ENCODE measurements at regions of chr17 and their contacts with region 1.

Region 1: GRCh38 chr17:69327060-69327831 is at the start of gene ABCA5:
- DNase-seq: peak; percentile 99
- ATAC-seq: peak; percentile 88
- H3K4me3 ChIP-seq: peak within 1 kb of the TSS; percentile 74
- H3K27ac ChIP-seq: no peak within 1 kb of the TSS; the same call in 1 of the 2 replicates
- H3K4me1 ChIP-seq: peaks cover 18% of the 10 kb centered on the region
- H3K27me3 ChIP-seq: no peaks in the 10 kb centered on the region
- CTCF ChIP-seq: no peak
- total RNA-seq, gene ABCA5: 7.0 and 9.4 TPM in 2 replicates

Region 2: DNA sequence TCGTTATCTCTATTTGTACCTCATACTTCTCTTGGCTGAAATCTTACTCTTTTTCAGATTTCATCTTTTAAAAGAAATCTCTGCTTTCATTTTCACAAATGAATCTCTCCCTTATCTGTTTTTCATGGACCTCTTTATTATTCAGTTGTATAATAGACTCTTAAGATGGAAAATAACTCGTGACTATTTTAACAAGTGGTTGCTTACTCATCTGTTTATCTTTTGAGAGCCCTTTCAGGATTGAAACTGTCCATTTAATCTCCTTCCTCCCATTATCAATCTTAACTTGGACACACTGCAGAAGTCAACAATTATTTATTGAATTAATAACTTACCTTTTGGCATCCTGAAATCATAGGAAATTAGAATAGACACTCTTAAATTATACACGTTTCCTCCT is 440.8 kb before region 1 on chr17:
- CTCF ChIA-PET with region 1: no interaction called
- POLR2A ChIA-PET with region 1: no interaction called
- intact Hi-C with region 1: no loop called
- DNase-seq: no peak
- ATAC-seq: no peak
- H3K4me3 ChIP-seq: no peak overlapping the region
- H3K27ac ChIP-seq: no peak overlapping the region
- H3K4me1 ChIP-seq: no peaks in the 10 kb centered on the region
- H3K27me3 ChIP-seq: peaks cover 18% of the 10 kb centered on the region; the same call in 1 of the 2 replicates
- CTCF ChIP-seq: no peak

Region 3: DNA sequence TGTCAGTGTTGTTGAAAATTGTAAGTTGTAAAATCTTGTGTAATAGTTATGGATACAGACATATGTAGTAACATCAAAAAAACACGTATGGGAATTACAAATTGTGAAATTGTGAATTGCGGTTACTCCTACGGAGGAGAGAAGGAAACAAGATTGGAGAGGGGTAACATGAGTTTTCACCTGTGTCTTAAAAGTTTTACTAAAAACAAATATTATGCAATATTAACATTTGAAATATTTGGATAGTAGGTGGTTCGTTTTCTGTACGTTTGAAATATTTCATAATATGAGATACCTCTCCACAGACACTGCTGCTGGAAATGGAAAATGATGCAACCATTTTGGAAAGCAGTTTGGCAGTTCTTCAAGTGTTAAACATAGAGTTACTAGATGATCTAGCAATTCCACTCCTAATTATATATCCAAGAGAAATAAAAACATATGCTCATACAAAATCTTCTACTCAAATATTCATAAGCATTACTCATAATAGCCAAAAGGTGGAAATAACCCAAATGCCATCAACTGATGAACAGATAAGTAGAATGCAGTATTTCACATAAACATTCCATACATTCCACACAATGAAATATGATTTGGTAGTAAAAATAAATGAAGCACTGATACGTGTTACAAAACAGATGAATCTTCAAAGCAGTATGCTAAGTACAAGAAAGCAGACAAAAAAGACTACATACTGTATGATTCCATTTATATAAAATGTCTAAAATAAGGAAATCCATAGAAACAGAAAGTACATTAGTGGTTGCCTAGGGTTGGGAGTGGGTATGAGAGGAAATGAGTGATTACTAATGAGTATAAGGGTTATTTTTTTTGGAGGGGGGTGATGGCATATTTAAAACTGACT is 57.9 kb before region 1 on chr17:
- CTCF ChIA-PET with region 1: no interaction called
- POLR2A ChIA-PET with region 1: interaction called, 5 read pairs
- intact Hi-C with region 1: loop called (anchors 1 kb)
- DNase-seq: peak; percentile 95
- ATAC-seq: peak; percentile 89
- H3K4me3 ChIP-seq: peak overlapping the region; percentile 49
- H3K27ac ChIP-seq: peak overlapping the region; percentile 52
- H3K4me1 ChIP-seq: peaks cover 36% of the 10 kb centered on the region
- H3K27me3 ChIP-seq: no peaks in the 10 kb centered on the region
- CTCF ChIP-seq: no peak

Region 4: DNA sequence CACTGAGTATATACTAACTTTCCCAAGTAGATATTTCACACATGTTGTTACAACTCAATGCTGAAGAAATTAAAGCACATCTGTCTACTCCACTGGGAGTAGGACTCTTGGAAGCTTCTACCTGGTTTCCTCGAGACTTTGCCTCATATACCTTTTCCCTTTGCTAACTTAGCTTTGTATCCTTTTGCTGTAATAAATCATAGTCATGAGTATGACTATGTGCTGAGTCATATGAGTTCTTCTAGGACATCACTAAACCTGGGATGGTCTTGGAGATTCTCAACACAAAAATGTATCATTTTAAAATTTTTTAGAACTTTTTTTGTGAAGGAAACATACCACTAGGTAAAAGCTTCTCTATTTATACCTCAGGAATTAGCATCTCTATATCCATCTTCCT is 40.1 kb before region 1 on chr17:
- CTCF ChIA-PET with region 1: no interaction called
- POLR2A ChIA-PET with region 1: interaction called, 3 read pairs
- intact Hi-C with region 1: loop called (anchors 1 kb)
- DNase-seq: peak; percentile 90
- ATAC-seq: peak; percentile 82
- H3K4me3 ChIP-seq: peak overlapping the region; percentile 14
- H3K27ac ChIP-seq: peak overlapping the region; percentile 52
- H3K4me1 ChIP-seq: peaks cover 29% of the 10 kb centered on the region
- H3K27me3 ChIP-seq: no peaks in the 10 kb centered on the region
- CTCF ChIP-seq: no peak